BJ (cell line): ENCODE measurements at regions of chr9 and their contacts with region 1.

Region 1: DNA sequence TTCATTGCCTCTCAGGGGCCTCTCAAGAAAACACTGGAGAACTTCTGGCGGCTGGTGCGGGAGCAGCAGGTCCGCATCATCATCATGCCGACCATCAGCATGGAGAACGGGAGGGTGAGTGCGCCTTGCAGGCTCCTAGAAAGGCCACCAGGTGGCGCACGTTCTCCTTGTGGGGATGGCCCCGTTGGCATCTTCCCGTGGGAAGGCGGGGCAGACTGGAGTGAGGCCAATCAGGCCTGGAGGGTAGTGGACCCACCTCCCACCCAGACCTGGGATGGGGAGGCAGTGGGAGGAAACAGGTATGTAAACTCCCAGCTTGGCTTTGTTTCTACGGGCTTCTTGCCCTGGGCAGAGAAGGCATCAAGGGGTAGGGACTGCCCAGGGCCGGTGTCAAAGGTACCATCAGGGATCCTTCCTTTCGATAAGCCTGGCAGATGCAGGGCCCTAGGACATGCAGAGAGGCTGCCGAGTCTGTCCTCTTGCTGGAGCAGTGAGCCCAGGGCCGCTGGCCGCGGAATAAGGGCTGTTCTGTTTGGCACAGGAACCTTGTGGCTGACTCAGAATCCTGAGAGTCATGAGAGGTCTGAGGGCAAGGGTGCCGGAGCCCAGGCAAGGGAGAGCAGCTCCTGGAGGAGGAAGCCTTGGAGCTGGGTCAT is 18.9 kb upstream of the SPTLC1 start:
- DNase-seq: no peak
- H3K4me3 ChIP-seq: no peak overlapping the region
- H3K27me3 ChIP-seq: no peaks in the 10 kb centered on the region
- CTCF ChIP-seq: peak; percentile 95

Region 2: GRCh38 chr9:91948597-91949373 is 185.3 kb before region 1 on chr9:
- CTCF ChIA-PET with region 1: no interaction called
- POLR2A ChIA-PET with region 1: no interaction called
- DNase-seq: no peak
- H3K4me3 ChIP-seq: peak overlapping the region; percentile 49
- H3K27me3 ChIP-seq: peaks cover 17% of the 10 kb centered on the region
- CTCF ChIP-seq: peak; percentile 34

Region 3: GRCh38 chr9:92119586-92119985 is 14.5 kb before region 1 on chr9:
- CTCF ChIA-PET with region 1: interaction called, 22 read pairs
- POLR2A ChIA-PET with region 1: no interaction called
- DNase-seq: no peak
- H3K4me3 ChIP-seq: no peak overlapping the region
- H3K27me3 ChIP-seq: no peaks in the 10 kb centered on the region; the same call in 1 of the 2 replicates
- CTCF ChIP-seq: no peak

Region 4: GRCh38 chr9:92242260-92243136 is 108.4 kb after region 1 on chr9:
- CTCF ChIA-PET with region 1: interaction called, 375 read pairs
- POLR2A ChIA-PET with region 1: no interaction called
- DNase-seq: no peak
- H3K4me3 ChIP-seq: no peak overlapping the region
- H3K27me3 ChIP-seq: no peaks in the 10 kb centered on the region
- CTCF ChIP-seq: peak; percentile 54